ENCODE measurements at regions of chr18 and their contacts with region 1.

Region 1: GRCh38 chr18:48777026-48777743 is 173.6 kb downstream of the SMAD7 start:
- DNase-seq: peak in 9 of 10 donors; percentile 57 to 83 (median 65)
- H3K4me3 ChIP-seq: no peak overlapping the region
- H3K27ac ChIP-seq: peak overlapping the region in 53 of 59 donors; percentile 7 to 82 (median 51)
- H3K27me3 ChIP-seq: no peaks in the 10 kb centered on the region
- CTCF ChIP-seq: peak; percentile 64 to 97 (median 88)

Region 2: GRCh38 chr18:48859311-48860268 is 82.4 kb after region 1 on chr18:
- intact Hi-C with region 1: loop called (anchors 2 to 5 kb)
- DNase-seq: peak; percentile 85 to 94 (median 92)
- H3K4me3 ChIP-seq: peak overlapping the region in 33 of 59 donors; percentile 1 to 47 (median 24)
- H3K27ac ChIP-seq: peak overlapping the region; percentile 11 to 98 (median 93)
- H3K27me3 ChIP-seq: no peaks in the 10 kb centered on the region
- CTCF ChIP-seq: peak in 48 of 56 donors; percentile 4 to 64 (median 35)

Region 3: DNA sequence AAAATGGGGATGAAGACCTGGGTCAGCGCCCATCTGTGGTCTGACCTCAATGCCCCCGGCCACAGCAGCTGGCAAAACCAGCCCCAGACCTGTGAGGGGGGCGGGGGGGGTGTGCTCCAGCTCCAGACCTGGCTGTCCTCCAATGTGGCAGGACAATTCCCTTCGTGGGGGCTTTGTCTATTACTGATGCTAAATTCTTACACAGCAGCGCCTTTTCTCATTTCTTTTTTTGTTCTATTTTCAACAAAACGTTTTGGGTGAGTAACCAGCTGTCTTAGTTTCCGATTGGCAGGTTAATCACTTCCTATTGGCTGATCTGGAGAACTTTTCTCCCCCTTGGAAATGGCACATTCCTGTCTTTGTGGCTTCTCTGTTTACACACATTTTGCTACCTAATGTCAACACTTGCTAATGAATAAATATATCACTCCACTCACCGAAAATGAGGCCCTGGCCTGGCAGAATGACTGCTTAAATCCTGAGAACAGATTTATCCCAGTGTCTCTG is 169.2 kb after region 1 on chr18:
- intact Hi-C with region 1: loop called (anchors 2 kb)
- DNase-seq: no peak
- H3K4me3 ChIP-seq: peak overlapping the region in 58 of 59 donors; percentile 67 to 94 (median 84)
- H3K27ac ChIP-seq: peak overlapping the region in 54 of 59 donors; percentile 4 to 100 (median 83)
- H3K27me3 ChIP-seq: no peaks in the 10 kb centered on the region
- CTCF ChIP-seq: no peak

Region 4: DNA sequence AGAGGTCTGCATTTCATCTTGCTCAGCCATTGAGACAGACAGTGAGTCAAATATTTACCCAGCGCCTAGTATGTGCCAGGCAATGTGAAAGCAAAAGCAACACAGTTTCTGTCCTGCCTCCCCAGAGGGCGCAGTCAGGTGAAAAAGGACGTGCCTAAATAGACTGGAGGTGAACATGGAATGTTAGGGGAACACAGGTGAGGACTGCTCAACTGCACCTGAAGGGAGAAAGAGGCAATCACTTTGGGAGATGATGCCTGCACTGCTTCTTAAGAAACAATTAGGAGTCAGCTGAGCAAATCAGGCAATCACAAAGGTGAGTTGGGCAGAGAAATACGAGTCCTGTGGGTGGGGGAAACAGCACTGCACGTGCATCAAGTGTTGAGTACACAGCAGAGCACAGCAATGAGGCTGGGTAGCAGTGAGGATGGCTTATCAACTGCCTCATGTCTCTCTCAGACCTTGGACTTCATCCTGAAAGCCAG is 391.9 kb after region 1 on chr18:
- intact Hi-C with region 1: loop called in 1 of 2 experiments (anchors 10 kb)
- DNase-seq: no peak
- H3K4me3 ChIP-seq: no peak overlapping the region
- H3K27ac ChIP-seq: peak overlapping the region in 2 of 59 donors; percentile 1 to 85
- H3K27me3 ChIP-seq: no peaks in the 10 kb centered on the region
- CTCF ChIP-seq: no peak

Region 5: DNA sequence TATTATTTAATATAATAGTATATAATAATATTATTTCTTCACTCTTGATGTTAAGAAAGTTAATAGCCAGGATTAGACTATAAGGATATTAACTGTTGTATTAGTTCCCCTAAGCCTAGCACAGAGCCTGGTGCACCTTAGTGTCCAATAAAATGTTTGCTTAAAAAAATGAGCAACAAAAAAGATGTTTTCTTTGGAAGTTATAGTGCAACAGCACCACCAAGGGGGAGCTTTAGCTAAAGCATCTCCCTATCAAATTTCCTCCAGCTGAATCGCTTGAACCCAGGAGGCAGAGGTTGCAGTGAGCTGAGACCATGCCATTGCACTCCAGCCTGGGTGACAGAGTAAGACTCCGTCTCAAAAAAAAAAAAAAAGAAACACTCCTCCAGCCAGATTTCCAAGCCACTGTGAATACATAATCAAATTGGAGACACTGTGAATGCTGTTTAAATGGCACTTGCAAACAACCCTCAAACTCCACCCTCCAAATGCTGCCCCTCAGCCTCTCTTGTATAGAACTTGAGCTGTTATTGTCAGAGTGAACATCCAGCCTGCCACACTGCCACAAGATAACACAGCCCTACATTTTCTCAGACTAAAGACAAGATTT is 461.4 kb after region 1 on chr18:
- intact Hi-C with region 1: loop called in 1 of 2 experiments (anchors 10 kb)
- DNase-seq: no peak
- H3K4me3 ChIP-seq: no peak overlapping the region
- H3K27ac ChIP-seq: peak overlapping the region in 7 of 59 donors; percentile 8 to 46 (median 18)
- H3K27me3 ChIP-seq: no peaks in the 10 kb centered on the region
- CTCF ChIP-seq: peak in 55 of 56 donors; percentile 32 to 79 (median 62)